HepG2 (cell line): ENCODE measurements at regions of chr5 and their contacts with region 1.

Region 1: GRCh38 chr5:95961617-95962474 is at the start of gene ELL2:
- DNase-seq: peak; percentile 97
- ATAC-seq: peak; percentile 86
- H3K4me3 ChIP-seq: peak within 1 kb of the TSS; percentile 94 to 100 (median 99)
- H3K27ac ChIP-seq: peak within 1 kb of the TSS; percentile 89
- H3K4me1 ChIP-seq: peaks cover 60% of the 10 kb centered on the region
- H3K27me3 ChIP-seq: peaks cover 0 to 6% of the 10 kb centered on the region in 2 experiments; a peak in 1 of 5 replicates
- CTCF ChIP-seq: no peak
- EP300 ChIP-seq: peak in 1 of 2 experiments; percentile 6; a peak in 1 of 4 replicates
- POLR2A ChIP-seq: peak; percentile 64 to 85
- RAD21 ChIP-seq: no peak
- total RNA-seq, gene ELL2: 64.5 and 78.9 TPM in 2 replicates

Region 2: DNA sequence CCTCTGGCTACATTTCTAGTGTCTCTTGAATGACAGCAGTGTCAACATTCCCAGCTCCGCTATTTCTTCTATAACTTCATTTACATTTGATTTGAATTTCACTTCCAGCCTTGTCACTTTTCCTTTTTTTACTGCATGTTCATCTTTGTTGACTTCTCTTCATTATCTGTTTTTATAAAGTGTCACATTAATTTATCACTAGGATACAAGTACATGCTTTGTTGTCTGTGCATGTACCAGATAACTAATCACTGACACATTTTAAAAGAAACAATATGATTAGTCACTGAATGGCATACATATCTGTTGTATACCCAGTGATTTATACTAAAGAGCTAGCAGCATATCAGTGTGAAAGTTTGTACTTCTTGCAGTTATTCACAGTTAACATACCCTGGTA is 377.9 kb before region 1 on chr5:
- CTCF ChIA-PET with region 1: no interaction called
- POLR2A ChIA-PET with region 1: no interaction called
- in situ Hi-C with region 1: no loop called
- intact Hi-C with region 1: no loop called
- DNase-seq: no peak
- ATAC-seq: no peak
- H3K4me3 ChIP-seq: no peak overlapping the region
- H3K27ac ChIP-seq: no peak overlapping the region
- H3K4me1 ChIP-seq: no peaks in the 10 kb centered on the region
- H3K27me3 ChIP-seq: no peaks in the 10 kb centered on the region; a peak in 1 of 5 replicates
- CTCF ChIP-seq: no peak
- EP300 ChIP-seq: no peak
- POLR2A ChIP-seq: no peak
- RAD21 ChIP-seq: no peak

Region 3: DNA sequence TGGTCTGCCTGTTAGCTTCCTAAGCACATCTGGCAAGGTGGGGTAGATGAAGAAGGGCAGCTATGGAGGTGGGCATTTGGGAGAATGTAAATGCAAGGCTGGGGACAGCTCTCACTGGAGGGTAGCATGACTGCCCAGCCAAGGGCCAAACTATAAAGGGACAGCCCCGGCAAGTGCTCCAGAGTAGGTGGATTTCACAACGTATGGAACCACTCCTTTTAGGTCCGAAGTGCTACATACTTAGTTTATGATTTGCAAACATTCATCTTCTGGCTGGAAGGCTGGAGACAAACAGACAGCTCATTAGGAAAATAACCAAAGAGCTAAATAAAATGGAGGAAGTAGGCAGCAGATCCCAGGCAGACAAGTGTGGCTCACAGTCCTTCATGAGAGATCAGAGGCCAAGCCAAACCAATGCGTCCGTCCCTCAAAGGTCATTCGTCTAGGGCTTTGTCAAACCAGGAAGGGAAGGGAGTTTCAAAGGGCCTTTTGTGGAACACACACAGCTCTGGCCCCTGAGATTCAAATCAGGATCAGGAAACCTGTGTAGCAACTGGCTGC is 96.8 kb before region 1 on chr5:
- CTCF ChIA-PET with region 1: no interaction called
- POLR2A ChIA-PET with region 1: interaction called, 15 read pairs
- in situ Hi-C with region 1: no loop called
- intact Hi-C with region 1: loop called (anchors 2 kb)
- DNase-seq: peak; percentile 99
- ATAC-seq: peak; percentile 91
- H3K4me3 ChIP-seq: peak overlapping the region in 2 of 3 experiments; percentile 32 to 41; a peak in 3 of 6 replicates
- H3K27ac ChIP-seq: peak overlapping the region; percentile 98
- H3K4me1 ChIP-seq: peaks cover 72% of the 10 kb centered on the region
- H3K27me3 ChIP-seq: no peaks in the 10 kb centered on the region
- CTCF ChIP-seq: no peak
- EP300 ChIP-seq: peak; percentile 48 to 89; a peak in 2 of 4 replicates
- POLR2A ChIP-seq: peak; percentile 54 to 73; a peak in 3 of 4 replicates
- RAD21 ChIP-seq: no peak

Region 4: GRCh38 chr5:96017951-96018350 is 56.1 kb after region 1 on chr5:
- CTCF ChIA-PET with region 1: no interaction called
- POLR2A ChIA-PET with region 1: no interaction called
- in situ Hi-C with region 1: no loop called
- intact Hi-C with region 1: loop called (anchors 10 kb)
- DNase-seq: peak; percentile 27
- ATAC-seq: no peak
- H3K4me3 ChIP-seq: no peak overlapping the region
- H3K27ac ChIP-seq: no peak overlapping the region
- H3K4me1 ChIP-seq: peaks cover 24% of the 10 kb centered on the region
- H3K27me3 ChIP-seq: no peaks in the 10 kb centered on the region
- CTCF ChIP-seq: no peak
- EP300 ChIP-seq: no peak
- POLR2A ChIP-seq: no peak
- RAD21 ChIP-seq: no peak

Region 5: GRCh38 chr5:96113170-96113939 is 151.5 kb after region 1 on chr5:
- CTCF ChIA-PET with region 1: no interaction called
- POLR2A ChIA-PET with region 1: interaction called, 8 read pairs
- in situ Hi-C with region 1: loop called (anchors 5 kb)
- intact Hi-C with region 1: no loop called
- DNase-seq: no peak
- ATAC-seq: no peak
- H3K4me3 ChIP-seq: no peak overlapping the region
- H3K27ac ChIP-seq: no peak overlapping the region
- H3K4me1 ChIP-seq: peaks cover 89% of the 10 kb centered on the region
- H3K27me3 ChIP-seq: no peaks in the 10 kb centered on the region
- CTCF ChIP-seq: no peak
- EP300 ChIP-seq: no peak
- POLR2A ChIP-seq: no peak
- RAD21 ChIP-seq: no peak

Region 6: DNA sequence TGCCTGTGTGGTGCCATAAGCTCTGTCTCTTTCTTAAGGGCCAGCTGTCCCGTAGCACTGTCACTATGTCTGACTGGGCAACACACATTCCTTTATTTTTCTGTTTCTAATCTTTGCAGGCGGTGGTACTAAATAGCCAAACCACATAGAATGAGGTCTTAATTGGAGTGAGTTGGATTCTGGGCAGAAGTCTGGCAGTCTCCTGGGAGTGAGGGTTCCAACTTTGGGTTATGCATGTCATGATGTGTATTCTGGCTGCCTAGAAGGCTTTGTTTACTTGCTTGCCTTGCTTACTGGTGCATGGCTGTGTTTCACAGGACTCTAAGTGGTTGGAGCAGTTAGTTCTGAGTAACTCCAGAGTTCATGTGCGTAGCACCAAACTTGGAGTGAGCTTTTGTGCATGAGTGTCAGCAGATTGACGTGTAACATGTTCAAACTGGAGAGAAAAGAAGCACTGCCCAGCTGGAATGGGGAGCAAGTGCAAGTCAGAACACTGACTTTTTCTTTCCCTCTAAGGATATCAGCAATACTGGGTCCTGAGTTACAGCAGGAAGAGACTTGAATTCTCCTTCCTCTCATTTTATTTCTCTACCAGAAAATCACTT is 285.4 kb after region 1 on chr5:
- CTCF ChIA-PET with region 1: no interaction called
- POLR2A ChIA-PET with region 1: no interaction called
- in situ Hi-C with region 1: no loop called
- intact Hi-C with region 1: loop called (anchors 2 kb)
- DNase-seq: no peak
- ATAC-seq: no peak
- H3K4me3 ChIP-seq: no peak overlapping the region
- H3K27ac ChIP-seq: no peak overlapping the region
- H3K4me1 ChIP-seq: peaks cover 77% of the 10 kb centered on the region
- H3K27me3 ChIP-seq: no peaks in the 10 kb centered on the region
- CTCF ChIP-seq: no peak
- EP300 ChIP-seq: no peak
- POLR2A ChIP-seq: no peak
- RAD21 ChIP-seq: no peak

Region 7: DNA sequence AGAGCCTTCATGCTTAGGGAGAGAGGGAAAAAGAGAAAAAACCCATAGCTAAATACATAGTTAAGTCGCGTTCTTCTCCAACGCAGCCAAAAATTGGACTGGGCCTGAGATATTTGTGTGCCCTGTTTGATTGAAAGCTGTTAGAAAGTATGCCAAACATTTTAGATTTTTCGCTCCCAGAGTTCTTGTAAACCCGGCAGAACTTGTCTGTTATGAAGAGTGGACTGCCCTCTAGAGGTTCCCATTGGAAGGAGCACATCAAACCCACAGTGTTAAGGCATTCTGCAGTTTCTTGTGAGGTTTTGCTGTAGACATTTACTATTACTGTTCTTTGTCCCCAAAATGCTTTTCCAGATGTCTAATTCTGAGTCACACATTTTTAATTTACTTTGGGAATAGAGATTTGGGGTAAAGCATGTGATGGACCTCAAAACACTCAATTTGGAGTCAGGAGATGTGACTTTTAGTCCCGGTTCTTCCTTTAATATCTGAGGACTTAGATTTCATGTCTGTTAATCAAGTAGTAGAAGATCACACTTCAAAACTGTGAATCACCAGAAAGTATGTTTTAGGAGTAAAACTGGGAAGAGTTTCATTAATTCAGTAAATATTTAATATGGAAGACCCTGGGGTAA is 374.6 kb after region 1 on chr5:
- CTCF ChIA-PET with region 1: interaction called, 8 read pairs
- POLR2A ChIA-PET with region 1: interaction called, 5 read pairs
- in situ Hi-C with region 1: loop called (anchors 10 kb)
- intact Hi-C with region 1: loop called (anchors 1 kb)
- DNase-seq: peak; percentile 84
- ATAC-seq: peak; percentile 90
- H3K4me3 ChIP-seq: peak overlapping the region in 1 of 3 experiments; percentile 28; a peak in 1 of 6 replicates
- H3K27ac ChIP-seq: peak overlapping the region; percentile 25
- H3K4me1 ChIP-seq: peaks cover 71% of the 10 kb centered on the region
- H3K27me3 ChIP-seq: no peaks in the 10 kb centered on the region
- CTCF ChIP-seq: peak; percentile 87
- EP300 ChIP-seq: peak in 1 of 2 experiments; percentile 50; a peak in 2 of 4 replicates
- POLR2A ChIP-seq: no peak
- RAD21 ChIP-seq: peak; percentile 85